MCF 10A (cell line): ENCODE measurements at regions of chr22 and their contacts with region 1.

Region 1: GRCh38 chr22:38311323-38311620 is 6.0 kb downstream of the CSNK1E start:
- DNase-seq: no peak
- H3K4me3 Mint-ChIP-seq: no peak overlapping the region
- H3K27ac Mint-ChIP-seq: peak overlapping the region; percentile 93
- H3K4me1 Mint-ChIP-seq: peaks cover 75% of the 10 kb centered on the region
- H3K27me3 Mint-ChIP-seq: no peaks in the 10 kb centered on the region
- CTCF ChIP-seq: no peak

Region 2: DNA sequence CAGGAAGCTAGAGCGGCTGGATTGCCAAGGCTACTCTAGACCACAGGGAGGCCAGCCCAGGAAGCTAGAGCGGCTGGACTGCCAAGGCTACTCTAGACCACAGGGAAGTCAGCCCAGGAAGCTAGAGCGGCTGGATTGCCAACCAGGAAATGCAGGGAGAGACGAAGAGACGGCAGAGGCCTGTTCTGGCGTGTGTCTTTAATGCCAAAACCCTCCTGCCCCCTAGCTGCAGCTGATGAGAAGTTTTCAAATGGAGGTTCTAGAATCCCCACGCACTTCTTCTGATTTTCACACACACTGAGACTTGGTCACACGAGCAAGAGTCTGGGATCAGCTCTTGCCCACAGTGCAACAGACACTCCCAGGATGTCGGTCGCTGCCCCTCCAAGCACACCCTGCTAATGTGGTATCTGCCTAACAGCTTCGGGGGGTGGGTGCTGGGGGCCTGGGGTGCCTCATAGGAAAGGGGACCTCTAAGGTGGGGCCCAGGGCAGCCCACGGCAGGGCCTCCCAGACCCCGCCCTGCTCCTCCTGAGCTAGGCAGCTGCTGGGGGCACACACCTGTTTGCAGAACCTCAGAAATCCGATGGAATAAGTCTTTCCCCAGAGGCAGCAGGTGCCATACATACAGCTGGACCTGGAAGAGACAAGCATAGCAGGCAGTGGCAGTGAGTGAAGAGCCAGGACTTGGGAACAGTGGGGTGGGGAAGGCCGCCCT is 81.0 kb before region 1 on chr22:
- CTCF ChIA-PET with region 1: no interaction called
- POLR2A ChIA-PET with region 1: no interaction called
- intact Hi-C with region 1: no loop called
- DNase-seq: peak; percentile 85
- H3K4me3 Mint-ChIP-seq: no peak overlapping the region
- H3K27ac Mint-ChIP-seq: peak overlapping the region; percentile 83
- H3K4me1 Mint-ChIP-seq: peaks cover 24% of the 10 kb centered on the region
- H3K27me3 Mint-ChIP-seq: no peaks in the 10 kb centered on the region
- CTCF ChIP-seq: peak; percentile 53

Region 3: DNA sequence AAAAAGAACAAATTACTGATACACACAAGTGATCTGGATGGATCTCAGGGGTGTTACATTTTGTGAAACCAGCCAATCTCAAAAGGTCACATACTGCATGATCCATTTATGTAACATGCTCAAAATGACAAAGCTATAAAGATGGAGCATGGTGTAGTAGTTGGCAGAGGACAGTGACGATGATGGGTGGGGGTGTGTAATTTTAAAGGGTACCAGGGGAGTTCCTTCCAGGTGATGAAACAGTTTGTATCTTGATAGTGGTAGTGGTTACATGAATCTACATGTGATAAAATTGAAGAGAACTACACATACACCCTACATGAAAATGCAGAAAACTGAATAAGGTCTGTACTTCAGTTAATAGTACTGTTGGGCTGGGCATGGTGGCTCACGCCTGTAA is 55.6 kb before region 1 on chr22:
- CTCF ChIA-PET with region 1: no interaction called
- POLR2A ChIA-PET with region 1: no interaction called
- intact Hi-C with region 1: no loop called
- DNase-seq: no peak
- H3K4me3 Mint-ChIP-seq: no peak overlapping the region
- H3K27ac Mint-ChIP-seq: no peak overlapping the region
- H3K4me1 Mint-ChIP-seq: peaks cover 6% of the 10 kb centered on the region
- H3K27me3 Mint-ChIP-seq: no peaks in the 10 kb centered on the region
- CTCF ChIP-seq: no peak

Region 4: DNA sequence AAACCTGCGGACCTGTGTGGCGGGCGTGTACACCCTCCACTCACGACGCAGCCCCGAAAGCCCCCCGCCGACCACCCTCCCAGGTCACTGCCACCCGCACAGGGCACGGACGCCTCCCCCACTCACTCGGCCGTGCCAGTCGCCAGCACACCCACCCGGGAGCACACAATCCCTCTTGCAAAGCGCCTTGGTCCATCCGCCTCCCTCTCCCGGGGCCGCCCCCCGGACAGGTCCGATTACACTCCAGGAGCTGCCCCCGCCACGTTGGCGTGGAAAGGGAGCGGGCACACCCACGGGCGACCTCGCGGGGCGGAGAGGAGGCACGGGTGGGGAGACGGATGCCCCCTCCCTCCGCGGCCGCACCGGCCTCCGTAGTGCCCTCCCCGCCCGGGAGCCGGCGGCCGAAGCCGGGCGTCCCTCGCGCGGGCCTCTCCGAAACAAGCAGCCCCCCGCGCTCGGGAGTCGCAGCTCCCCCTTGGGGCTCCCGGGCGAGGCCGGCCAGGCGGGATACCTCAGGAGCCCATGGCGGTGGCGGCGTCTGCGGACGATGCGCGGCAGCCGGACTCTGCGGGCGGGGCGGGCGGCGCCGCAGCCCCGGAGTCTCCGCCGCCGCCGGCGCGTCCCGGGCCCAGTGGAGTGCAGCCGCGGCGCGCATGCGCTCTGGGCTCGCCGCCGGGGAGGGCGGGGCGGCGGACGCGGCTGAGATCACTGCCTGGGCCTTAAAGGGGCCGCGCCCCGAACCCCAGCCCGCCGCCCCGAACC is 38.7 kb before region 1 on chr22 and contains the start of gene TMEM184B:
- CTCF ChIA-PET with region 1: no interaction called
- POLR2A ChIA-PET with region 1: interaction called, 13 read pairs
- intact Hi-C with region 1: no loop called
- DNase-seq: peak; percentile 67
- H3K4me3 Mint-ChIP-seq: peak within 1 kb of the TSS; percentile 74
- H3K27ac Mint-ChIP-seq: peak within 1 kb of the TSS; percentile 86
- H3K4me1 Mint-ChIP-seq: peaks cover 21% of the 10 kb centered on the region
- H3K27me3 Mint-ChIP-seq: no peaks in the 10 kb centered on the region
- CTCF ChIP-seq: no peak
- total RNA-seq, gene TMEM184B: 58.7 and 69.1 TPM in 2 replicates

Region 5: GRCh38 chr22:38506118-38506962 is 195.1 kb after region 1 on chr22 and contains the start of gene DDX17:
- CTCF ChIA-PET with region 1: no interaction called
- POLR2A ChIA-PET with region 1: no interaction called
- intact Hi-C with region 1: no loop called
- DNase-seq: peak; percentile 93
- H3K4me3 Mint-ChIP-seq: peak within 1 kb of the TSS; percentile 81
- H3K27ac Mint-ChIP-seq: peak within 1 kb of the TSS; percentile 99
- H3K4me1 Mint-ChIP-seq: peaks cover 24% of the 10 kb centered on the region
- H3K27me3 Mint-ChIP-seq: no peaks in the 10 kb centered on the region
- CTCF ChIP-seq: no peak
- total RNA-seq, gene DDX17: 322 and 422 TPM in 2 replicates

Region 6: GRCh38 chr22:38715176-38715764 is 404.0 kb after region 1 on chr22:
- CTCF ChIA-PET with region 1: no interaction called
- POLR2A ChIA-PET with region 1: no interaction called
- intact Hi-C with region 1: no loop called
- DNase-seq: no peak
- H3K4me3 Mint-ChIP-seq: no peak overlapping the region
- H3K27ac Mint-ChIP-seq: no peak overlapping the region
- H3K4me1 Mint-ChIP-seq: peaks cover 16% of the 10 kb centered on the region
- H3K27me3 Mint-ChIP-seq: no peaks in the 10 kb centered on the region
- CTCF ChIP-seq: no peak